ENCODE measurements at regions of chr6 and their contacts with region 1.

Region 1: GRCh38 chr6:151323791-151324487 is 67.4 kb downstream of the ZBTB2 start:
- DNase-seq: peak; percentile 78
- ATAC-seq: peak; percentile 91
- H3K4me3 Mint-ChIP-seq: no peak overlapping the region
- H3K27ac Mint-ChIP-seq: no peak overlapping the region
- H3K4me1 Mint-ChIP-seq: peaks cover 18% of the 10 kb centered on the region
- H3K27me3 Mint-ChIP-seq: peaks cover 35% of the 10 kb centered on the region
- CTCF ChIP-seq: peak; percentile 98

Region 2: DNA sequence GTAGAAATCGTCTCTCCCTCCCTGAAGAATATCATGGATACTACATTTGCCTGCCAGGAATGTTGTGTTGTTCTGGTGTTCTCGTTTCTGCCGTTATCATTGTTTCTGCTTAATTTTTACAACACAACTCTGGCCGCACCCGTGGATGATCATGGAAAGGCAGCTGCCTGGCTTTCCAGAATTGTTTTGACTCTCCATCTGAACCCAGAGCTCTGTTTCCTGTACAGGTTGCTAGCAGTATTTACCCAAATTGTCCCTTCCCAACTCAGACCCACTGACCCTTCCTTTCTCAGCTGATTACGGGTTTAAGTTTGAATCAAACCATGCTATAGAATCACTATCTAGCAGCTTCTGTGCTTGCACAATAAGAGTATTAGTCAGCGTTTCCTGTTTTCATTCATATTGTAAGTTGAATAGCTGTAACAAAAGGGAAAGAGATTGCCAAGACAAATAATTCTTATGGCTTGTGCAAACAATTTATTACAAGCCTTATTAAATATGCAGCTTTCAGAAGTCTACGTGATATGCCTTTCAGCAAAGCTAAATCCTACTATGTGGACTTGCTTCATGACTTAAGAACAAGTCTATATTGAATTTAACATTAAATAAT is 319.4 kb before region 1 on chr6:
- CTCF ChIA-PET with region 1: interaction called, 179 read pairs
- POLR2A ChIA-PET with region 1: no interaction called
- intact Hi-C with region 1: no loop called
- DNase-seq: no peak
- ATAC-seq: peak; percentile 60
- H3K4me3 Mint-ChIP-seq: no peak overlapping the region
- H3K27ac Mint-ChIP-seq: peak overlapping the region; percentile 7
- H3K4me1 Mint-ChIP-seq: peaks cover 30% of the 10 kb centered on the region
- H3K27me3 Mint-ChIP-seq: no peaks in the 10 kb centered on the region
- CTCF ChIP-seq: no peak

Region 3: GRCh38 chr6:151036869-151037680 is 286.9 kb before region 1 on chr6:
- CTCF ChIA-PET with region 1: interaction called, 11 read pairs
- POLR2A ChIA-PET with region 1: no interaction called
- intact Hi-C with region 1: no loop called
- DNase-seq: peak; percentile 35
- ATAC-seq: no peak
- H3K4me3 Mint-ChIP-seq: no peak overlapping the region
- H3K27ac Mint-ChIP-seq: peak overlapping the region; percentile 52
- H3K4me1 Mint-ChIP-seq: peaks cover 11% of the 10 kb centered on the region
- H3K27me3 Mint-ChIP-seq: no peaks in the 10 kb centered on the region
- CTCF ChIP-seq: no peak

Region 4: GRCh38 chr6:151290877-151291721 is 32.8 kb before region 1 on chr6:
- CTCF ChIA-PET with region 1: interaction called, 27 read pairs
- POLR2A ChIA-PET with region 1: no interaction called
- intact Hi-C with region 1: no loop called
- DNase-seq: no peak
- ATAC-seq: no peak
- H3K4me3 Mint-ChIP-seq: no peak overlapping the region
- H3K27ac Mint-ChIP-seq: no peak overlapping the region
- H3K4me1 Mint-ChIP-seq: peaks cover 20% of the 10 kb centered on the region
- H3K27me3 Mint-ChIP-seq: peaks cover 36% of the 10 kb centered on the region
- CTCF ChIP-seq: no peak

Region 5: GRCh38 chr6:151357758-151358436 is 34.0 kb after region 1 on chr6:
- CTCF ChIA-PET with region 1: interaction called, 18 read pairs
- POLR2A ChIA-PET with region 1: no interaction called
- intact Hi-C with region 1: no loop called
- DNase-seq: no peak
- ATAC-seq: no peak
- H3K4me3 Mint-ChIP-seq: no peak overlapping the region
- H3K27ac Mint-ChIP-seq: no peak overlapping the region
- H3K4me1 Mint-ChIP-seq: peaks cover 10% of the 10 kb centered on the region
- H3K27me3 Mint-ChIP-seq: no peaks in the 10 kb centered on the region
- CTCF ChIP-seq: no peak